HepG2 (cell line): ENCODE measurements at regions of chr10 and their contacts with region 1.

Region 1: DNA sequence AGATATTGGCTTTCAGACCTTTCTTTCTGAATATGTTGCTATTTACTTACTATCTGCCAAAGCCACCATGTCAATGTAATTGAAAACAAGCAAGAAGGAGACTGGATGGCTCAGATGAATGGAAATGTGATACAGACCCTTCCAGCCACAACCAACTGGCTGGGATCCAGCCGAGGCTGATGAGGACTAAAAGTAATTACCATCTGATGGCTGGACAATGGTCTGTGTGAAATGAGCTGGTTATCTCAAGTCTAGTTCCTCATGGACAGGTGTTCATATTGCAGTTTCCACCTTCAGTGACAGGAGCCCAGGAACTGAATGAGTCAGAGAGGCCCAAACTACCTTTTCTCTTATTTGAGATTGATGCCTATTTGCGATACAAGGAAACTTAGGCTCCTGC is 267.5 kb downstream of the GATA3 start:
- DNase-seq: no peak
- ATAC-seq: no peak
- H3K4me3 ChIP-seq: no peak overlapping the region
- H3K27ac ChIP-seq: no peak overlapping the region
- H3K4me1 ChIP-seq: no peaks in the 10 kb centered on the region
- H3K27me3 ChIP-seq: peaks cover 0 to 3% of the 10 kb centered on the region in 2 experiments; a peak in 1 of 5 replicates
- CTCF ChIP-seq: no peak
- EP300 ChIP-seq: no peak
- POLR2A ChIP-seq: no peak
- RAD21 ChIP-seq: no peak

Region 2: DNA sequence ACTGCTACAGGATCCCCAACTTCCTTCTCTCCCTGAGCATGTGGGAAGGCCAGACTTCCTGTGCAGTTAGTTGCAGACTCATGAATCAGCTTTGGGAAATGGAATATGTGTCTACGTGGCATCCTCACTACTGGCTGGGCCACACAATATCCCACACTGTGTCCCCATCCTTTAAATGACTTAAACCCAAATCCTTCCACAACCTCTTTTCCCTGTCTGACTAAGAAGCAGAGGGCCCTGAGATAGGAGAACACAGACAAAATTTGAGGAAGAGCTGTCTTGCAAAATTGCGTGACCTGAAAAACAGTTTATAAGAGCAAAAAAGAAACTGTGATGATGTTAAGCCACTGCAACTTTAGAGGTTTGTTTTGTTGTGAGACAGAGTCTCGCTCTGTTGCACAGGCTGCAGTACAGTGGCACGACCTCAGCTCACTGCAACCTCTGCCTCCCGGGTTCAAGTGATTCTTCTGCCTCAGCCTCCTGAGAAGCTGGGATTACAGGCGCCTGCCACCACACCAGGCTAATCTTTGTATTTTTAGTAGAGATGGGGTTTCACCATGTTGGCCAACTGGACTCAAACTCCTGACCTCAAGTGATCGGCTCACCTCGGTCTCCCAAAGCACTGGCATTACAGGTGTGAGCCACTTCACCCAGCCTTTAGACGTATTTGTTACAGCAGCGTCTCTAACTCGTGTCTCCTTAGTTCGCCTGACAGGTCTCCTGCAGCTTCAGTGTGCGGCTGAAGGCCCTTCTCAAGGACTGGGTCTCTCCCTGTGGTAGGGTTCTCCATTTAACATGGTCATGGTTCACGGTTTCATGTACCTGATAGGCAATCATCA is 864.3 kb before region 1 on chr10:
- CTCF ChIA-PET with region 1: no interaction called
- POLR2A ChIA-PET with region 1: no interaction called
- in situ Hi-C with region 1: no loop called
- intact Hi-C with region 1: loop called (anchors 5 kb)
- DNase-seq: no peak
- ATAC-seq: no peak
- H3K4me3 ChIP-seq: no peak overlapping the region
- H3K27ac ChIP-seq: no peak overlapping the region
- H3K4me1 ChIP-seq: no peaks in the 10 kb centered on the region
- H3K27me3 ChIP-seq: peaks cover 3 to 5% of the 10 kb centered on the region in 2 experiments; a peak in 1 of 5 replicates
- CTCF ChIP-seq: no peak
- EP300 ChIP-seq: no peak
- POLR2A ChIP-seq: no peak
- RAD21 ChIP-seq: no peak